Colonic mucosa (tissue), 4 donors: ENCODE measurements at regions of chr9 and their contacts with region 1.

Region 1: DNA sequence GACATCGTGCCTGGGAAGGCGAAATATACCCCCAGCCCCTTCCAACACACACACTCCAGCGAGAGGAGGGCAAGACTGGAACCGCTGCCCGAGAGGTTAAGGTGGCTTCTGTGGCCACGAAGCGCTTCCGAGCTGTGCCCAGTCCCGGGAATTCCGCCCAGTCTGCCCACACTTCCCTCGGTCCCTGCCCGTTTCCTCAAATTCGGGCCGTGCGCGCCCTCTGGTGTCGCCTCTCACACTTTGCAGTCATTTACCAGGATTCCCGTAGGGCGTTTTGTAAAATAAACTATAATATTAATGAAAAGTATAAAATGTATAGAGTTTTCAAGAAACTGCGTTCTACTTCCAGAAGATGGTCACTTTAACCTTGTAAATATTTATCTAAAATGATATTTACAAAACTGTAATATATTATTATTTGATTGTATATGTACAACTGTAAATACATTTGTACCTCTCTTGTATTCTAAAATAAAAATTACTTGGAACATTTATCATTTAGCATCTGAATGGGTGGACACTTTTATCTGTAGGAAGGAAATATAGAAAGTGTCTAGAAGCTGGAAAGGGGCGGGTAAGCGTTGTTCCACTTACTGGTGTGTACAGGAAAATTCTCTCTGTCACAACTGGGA is 11.0 kb upstream of the EXOSC2 start:
- DNase-seq: peak; percentile 82
- H3K4me3 ChIP-seq: peak overlapping the region; percentile 53
- H3K27ac ChIP-seq: no peak overlapping the region
- H3K4me1 ChIP-seq: peaks cover 4% of the 10 kb centered on the region
- H3K27me3 ChIP-seq: no peaks in the 10 kb centered on the region
- CTCF ChIP-seq: peak; percentile 78

Region 2: GRCh38 chr9:130461218-130461630 is 221.4 kb before region 1 on chr9:
- intact Hi-C with region 1: loop called (anchors 1 kb)
- DNase-seq: peak; percentile 57
- H3K4me3 ChIP-seq: no peak overlapping the region
- H3K27ac ChIP-seq: no peak overlapping the region
- H3K4me1 ChIP-seq: no peaks in the 10 kb centered on the region
- H3K27me3 ChIP-seq: no peaks in the 10 kb centered on the region
- CTCF ChIP-seq: peak; percentile 90

Region 3: DNA sequence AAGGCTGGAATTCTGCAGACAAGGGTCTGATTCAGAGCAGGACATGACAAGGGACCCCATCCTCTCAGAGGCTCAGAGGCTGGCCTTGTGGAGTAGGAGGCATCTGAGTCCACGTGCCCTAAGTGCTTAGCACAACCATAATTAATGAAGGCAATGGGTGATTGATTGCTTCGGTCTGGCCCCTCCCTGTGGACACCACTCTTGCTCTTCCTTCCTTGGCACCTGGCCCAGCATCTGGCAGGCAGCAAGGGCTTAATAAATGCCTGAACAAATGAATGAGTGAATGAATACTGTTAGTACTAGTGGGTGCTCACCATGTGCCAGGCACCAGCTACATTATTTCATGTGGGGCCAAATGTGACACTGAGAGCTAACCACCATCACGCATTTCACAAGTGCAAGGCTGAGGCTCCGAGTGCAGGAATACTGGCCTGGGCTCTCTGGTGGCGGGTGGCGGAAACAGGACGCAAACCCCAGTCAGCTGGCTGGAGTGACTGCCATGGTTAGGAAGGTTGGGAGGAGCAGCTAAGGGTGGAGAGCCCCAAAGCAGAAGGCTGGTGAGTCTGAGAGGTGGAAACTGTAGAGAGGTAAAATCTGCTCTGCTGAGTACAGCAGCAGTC is 184.2 kb before region 1 on chr9:
- intact Hi-C with region 1: no loop called
- DNase-seq: no peak
- H3K4me3 ChIP-seq: no peak overlapping the region
- H3K27ac ChIP-seq: no peak overlapping the region
- H3K4me1 ChIP-seq: no peaks in the 10 kb centered on the region
- H3K27me3 ChIP-seq: no peaks in the 10 kb centered on the region
- CTCF ChIP-seq: no peak